ENCODE measurements at regions of chr15 and their contacts with region 1.

Region 1: DNA sequence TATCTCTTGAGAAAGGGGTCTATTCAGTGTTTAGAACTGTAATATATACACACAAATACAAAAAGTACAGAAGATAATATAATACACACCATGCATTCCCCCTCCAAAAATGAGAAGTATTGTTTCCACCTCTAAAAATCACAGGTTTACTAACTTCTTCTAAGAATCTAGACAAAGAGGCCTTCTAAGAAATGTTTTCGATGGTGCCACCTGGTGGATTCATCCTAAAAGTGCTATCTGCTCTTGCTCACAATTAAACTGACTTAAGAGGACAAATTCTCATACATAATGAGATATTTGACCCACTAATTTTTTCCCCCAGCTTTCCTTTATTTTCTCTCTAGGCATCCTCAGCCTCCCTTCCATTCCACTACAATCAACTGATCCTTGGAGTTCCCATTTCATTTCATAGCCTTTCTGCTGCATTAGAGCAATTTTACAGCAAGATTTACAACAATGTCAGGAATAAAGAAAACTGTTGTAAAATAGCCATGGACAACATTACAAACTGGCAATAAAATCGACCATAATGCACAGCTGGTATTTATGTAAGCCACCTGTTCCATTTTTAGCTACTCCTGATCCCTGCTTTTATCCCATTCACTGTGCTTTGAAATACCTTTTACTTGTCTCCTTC is 124.6 kb downstream of the ARRDC4 start:
- DNase-seq: peak in 1 of 2 donors; percentile 19
- ATAC-seq: no peak
- H3K4me3 ChIP-seq: no peak overlapping the region
- H3K27ac ChIP-seq: no peak overlapping the region
- H3K4me1 ChIP-seq: no peaks in the 10 kb centered on the region
- H3K27me3 ChIP-seq: no peaks in the 10 kb centered on the region
- CTCF ChIP-seq: peak; percentile 49 to 68 (median 58)
- POLR2A ChIP-seq: no peak

Region 2: DNA sequence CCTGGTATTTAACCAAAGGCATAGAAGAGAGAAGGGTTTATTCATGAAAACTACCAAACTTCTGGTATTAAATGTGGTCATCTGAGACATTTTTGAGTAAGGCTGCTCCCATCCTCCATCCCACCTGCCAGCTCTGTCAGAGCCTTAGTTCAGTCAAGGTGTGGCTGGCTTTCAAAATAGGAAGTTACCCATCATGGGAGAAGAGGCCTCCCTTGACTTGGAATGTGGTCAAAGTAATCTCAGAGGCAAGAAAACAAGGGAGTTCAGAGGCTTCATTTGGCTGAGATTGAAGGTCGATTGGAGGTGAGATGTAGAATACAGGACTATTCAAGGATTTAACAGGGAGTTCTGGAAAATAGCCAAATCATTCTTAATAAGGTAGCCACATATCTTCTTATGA is 665.0 kb before region 1 on chr15:
- in situ Hi-C with region 1: no loop called
- intact Hi-C with region 1: no loop called
- DNase-seq: no peak
- ATAC-seq: no peak
- H3K4me3 ChIP-seq: no peak overlapping the region
- H3K27ac ChIP-seq: no peak overlapping the region
- H3K4me1 ChIP-seq: no peaks in the 10 kb centered on the region
- H3K27me3 ChIP-seq: no peaks in the 10 kb centered on the region
- CTCF ChIP-seq: no peak
- POLR2A ChIP-seq: no peak

Region 3: DNA sequence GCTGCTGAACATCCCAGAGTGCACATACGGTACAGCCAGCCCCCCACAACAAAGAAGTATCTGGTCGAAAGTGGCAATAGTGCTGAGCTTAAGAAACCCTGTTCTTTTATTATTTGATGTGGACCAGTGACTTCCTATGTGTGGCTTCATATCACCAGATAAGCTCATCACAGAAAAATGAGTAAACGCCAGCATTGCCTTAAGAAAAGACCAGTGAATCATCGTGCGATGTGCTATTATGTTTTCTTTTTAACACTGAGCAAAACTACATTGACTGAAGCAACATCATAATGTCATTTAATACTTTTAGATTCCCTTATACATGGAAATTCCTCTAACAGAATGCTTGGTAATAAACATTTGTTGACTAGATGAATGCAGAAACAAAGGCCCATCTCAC is 169.9 kb before region 1 on chr15:
- in situ Hi-C with region 1: loop called in 2 of 4 experiments (anchors 5 to 10 kb)
- intact Hi-C with region 1: no loop called
- DNase-seq: no peak
- ATAC-seq: no peak
- H3K4me3 ChIP-seq: no peak overlapping the region
- H3K27ac ChIP-seq: no peak overlapping the region
- H3K4me1 ChIP-seq: no peaks in the 10 kb centered on the region
- H3K27me3 ChIP-seq: peaks cover 0 to 11% (median 0%) of the 10 kb centered on the region in 3 donors
- CTCF ChIP-seq: no peak
- POLR2A ChIP-seq: no peak

Region 4: DNA sequence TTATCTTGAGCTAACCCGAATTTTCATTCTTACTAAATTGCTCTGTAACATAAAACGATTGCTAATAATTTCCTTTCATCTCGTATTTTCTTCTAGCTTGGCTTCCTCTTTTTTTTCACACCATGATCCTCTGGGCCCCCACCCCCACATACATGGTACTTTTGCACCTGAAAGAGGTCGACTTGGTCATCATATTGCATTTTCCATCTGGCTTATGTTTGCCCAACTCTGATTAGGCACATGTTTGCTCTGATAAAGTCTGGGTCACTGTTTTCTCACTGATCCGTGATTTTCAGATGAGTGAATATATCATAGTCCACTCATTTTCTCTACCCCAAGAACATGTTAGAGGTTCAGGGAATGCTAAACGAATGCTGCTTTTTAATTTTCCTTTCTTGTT is 75.2 kb before region 1 on chr15:
- in situ Hi-C with region 1: no loop called
- intact Hi-C with region 1: no loop called
- DNase-seq: no peak
- ATAC-seq: no peak
- H3K4me3 ChIP-seq: no peak overlapping the region
- H3K27ac ChIP-seq: no peak overlapping the region
- H3K4me1 ChIP-seq: no peaks in the 10 kb centered on the region
- H3K27me3 ChIP-seq: peaks cover 0 to 2% (median 0%) of the 10 kb centered on the region in 3 donors
- CTCF ChIP-seq: no peak
- POLR2A ChIP-seq: no peak